OCI-LY7 (cell line): ENCODE measurements at regions of chr11 and their contacts with region 1.

Region 1: GRCh38 chr11:9314291-9315036 is at the start of gene TMEM41B:
- DNase-seq: peak; percentile 100
- H3K4me3 ChIP-seq: peak within 1 kb of the TSS; percentile 98
- H3K27ac ChIP-seq: peak within 1 kb of the TSS; percentile 89
- H3K4me1 ChIP-seq: peaks cover 27% of the 10 kb centered on the region
- CTCF ChIP-seq: 0 out of 2 replicates have a peak, but pooled peaks have one; percentile 40
- total RNA-seq, gene TMEM41B: 46.9 and 53.9 TPM in 2 replicates

Region 2: DNA sequence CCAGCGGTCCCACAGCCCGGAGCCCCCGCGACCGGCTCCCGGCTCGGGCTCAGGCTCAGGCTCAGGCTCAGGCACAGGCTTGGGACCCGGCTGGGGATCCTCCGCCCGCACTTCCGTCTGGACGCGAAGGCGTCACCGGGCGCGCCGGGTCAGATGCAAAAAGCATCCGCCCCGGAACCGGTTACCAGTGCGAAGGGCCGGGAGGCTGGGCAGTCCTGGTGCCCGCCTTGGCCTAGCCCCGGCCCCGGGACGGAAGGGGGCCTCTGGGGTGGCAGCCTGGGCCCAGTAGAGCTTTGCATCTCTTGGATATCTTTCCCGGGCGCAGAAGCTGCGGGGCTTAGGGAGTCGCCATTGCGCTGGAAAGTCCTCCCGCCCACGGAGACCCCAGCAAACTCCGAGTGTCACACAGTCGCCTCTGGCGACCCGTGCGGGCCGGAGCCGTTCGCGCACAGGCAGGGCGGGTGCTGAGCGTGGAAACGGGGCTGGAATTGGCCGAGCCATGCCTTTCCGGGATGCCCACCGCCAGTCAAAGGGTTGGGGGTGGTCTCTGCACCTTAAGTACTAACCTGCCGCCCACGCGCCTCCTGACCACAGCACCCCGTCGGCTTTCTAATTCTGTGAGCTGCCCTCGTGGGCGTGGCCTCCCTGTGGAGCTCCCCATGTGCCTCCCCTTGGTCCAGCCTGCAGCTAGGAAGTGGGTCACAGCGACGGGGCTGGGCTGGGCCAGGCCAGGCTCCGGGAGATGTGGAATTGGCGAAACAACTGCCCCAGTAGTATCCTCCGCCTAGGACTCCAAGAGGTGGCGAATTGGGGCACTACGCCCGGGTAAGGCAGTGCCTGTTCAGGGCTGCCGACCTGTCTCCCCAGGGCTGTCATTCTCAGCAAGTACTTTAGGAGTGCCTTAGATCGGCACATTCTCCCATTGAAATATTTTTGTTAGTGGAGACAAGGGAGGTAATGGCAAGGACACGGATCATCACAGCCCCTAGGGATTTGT is 349.8 kb before region 1 on chr11 and contains the start of gene TMEM9B:
- CTCF ChIA-PET with region 1: interaction called, 3 read pairs
- POLR2A ChIA-PET with region 1: interaction called, 4 read pairs
- intact Hi-C with region 1: loop called (anchors 1 kb)
- DNase-seq: peak; percentile 88
- H3K4me3 ChIP-seq: peak within 1 kb of the TSS; percentile 88
- H3K27ac ChIP-seq: peak within 1 kb of the TSS; percentile 60
- H3K4me1 ChIP-seq: peaks cover 20% of the 10 kb centered on the region
- CTCF ChIP-seq: no peak
- total RNA-seq, gene TMEM9B: 8.5 and 13.4 TPM in 2 replicates

Region 3: DNA sequence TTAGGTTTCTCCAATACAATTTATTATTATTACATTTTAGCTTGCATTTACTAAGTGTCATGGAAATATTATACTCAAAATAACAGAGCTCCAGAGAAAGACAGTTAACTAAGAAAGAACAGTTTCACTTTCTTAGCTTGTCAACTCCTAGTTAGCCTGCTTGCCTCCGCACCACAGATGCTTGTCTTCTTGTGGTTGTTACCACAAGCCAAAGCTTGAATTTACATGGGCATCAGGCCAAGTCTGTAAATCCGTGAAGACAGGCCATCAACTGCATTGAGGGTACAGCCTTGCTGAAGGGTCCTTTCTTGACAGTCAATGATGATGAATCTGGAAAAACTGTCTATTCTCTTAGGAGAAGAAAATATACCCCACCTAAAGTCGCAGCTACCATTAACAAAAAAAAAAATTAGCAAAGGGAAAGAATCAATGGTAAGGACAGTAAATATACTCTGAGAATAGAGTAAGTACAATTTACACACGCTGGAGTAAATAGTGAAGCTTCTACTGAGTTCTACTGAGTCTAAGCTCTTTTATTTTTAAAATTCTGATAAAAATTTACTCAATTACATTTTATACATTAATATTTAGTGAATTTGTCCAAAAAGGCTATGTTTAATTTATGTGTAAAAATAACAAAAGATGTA is 33.7 kb before region 1 on chr11:
- CTCF ChIA-PET with region 1: no interaction called
- POLR2A ChIA-PET with region 1: interaction called, 8 read pairs
- intact Hi-C with region 1: loop called (anchors 1 kb)
- DNase-seq: peak; percentile 43
- H3K4me3 ChIP-seq: no peak overlapping the region
- H3K27ac ChIP-seq: no peak overlapping the region
- H3K4me1 ChIP-seq: peaks cover 4% of the 10 kb centered on the region
- CTCF ChIP-seq: no peak

Region 4: DNA sequence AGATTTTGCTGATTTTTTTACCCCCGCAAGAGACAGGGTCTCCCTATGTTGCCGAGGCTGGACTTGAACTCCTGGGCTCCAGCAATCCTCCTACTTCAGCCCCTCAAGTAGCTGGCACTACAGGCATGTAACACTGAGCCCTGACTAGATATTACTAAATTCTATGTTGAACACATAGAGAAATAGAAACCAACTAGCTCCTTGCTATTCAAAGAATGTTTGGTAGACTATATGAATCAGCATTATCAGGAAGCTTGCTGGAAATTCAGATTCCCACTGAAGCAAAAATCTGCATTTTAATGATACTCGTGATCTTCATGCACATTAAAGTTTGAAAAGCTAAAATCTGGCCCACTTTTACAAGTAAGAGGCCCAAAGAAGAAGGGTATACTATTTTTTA is 12.0 kb before region 1 on chr11:
- CTCF ChIA-PET with region 1: no interaction called
- POLR2A ChIA-PET with region 1: interaction called, 12 read pairs
- intact Hi-C with region 1: no loop called
- DNase-seq: no peak
- H3K4me3 ChIP-seq: no peak overlapping the region
- H3K27ac ChIP-seq: no peak overlapping the region
- H3K4me1 ChIP-seq: no peaks in the 10 kb centered on the region
- CTCF ChIP-seq: no peak

Region 5: GRCh38 chr11:9384535-9385303 is 70.3 kb after region 1 on chr11 and contains the start of gene IPO7:
- CTCF ChIA-PET with region 1: no interaction called
- POLR2A ChIA-PET with region 1: interaction called, 6 read pairs
- intact Hi-C with region 1: loop called (anchors 2 kb)
- DNase-seq: peak; percentile 94
- H3K4me3 ChIP-seq: peak within 1 kb of the TSS; percentile 97
- H3K27ac ChIP-seq: peak within 1 kb of the TSS; percentile 64
- H3K4me1 ChIP-seq: peaks cover 27% of the 10 kb centered on the region
- CTCF ChIP-seq: peak; percentile 49
- total RNA-seq, gene IPO7: 88.3 and 120 TPM in 2 replicates

Region 6: GRCh38 chr11:9438611-9439010 is 124.1 kb after region 1 on chr11:
- CTCF ChIA-PET with region 1: no interaction called
- POLR2A ChIA-PET with region 1: interaction called, 16 read pairs
- intact Hi-C with region 1: no loop called
- DNase-seq: no peak
- H3K4me3 ChIP-seq: no peak overlapping the region
- H3K27ac ChIP-seq: no peak overlapping the region
- H3K4me1 ChIP-seq: no peaks in the 10 kb centered on the region
- CTCF ChIP-seq: no peak

Region 7: GRCh38 chr11:9460322-9461067 is 146.0 kb after region 1 on chr11 and contains the start of gene ZNF143:
- CTCF ChIA-PET with region 1: no interaction called
- POLR2A ChIA-PET with region 1: interaction called, 9 read pairs
- intact Hi-C with region 1: loop called (anchors 1 kb)
- DNase-seq: peak; percentile 100
- H3K4me3 ChIP-seq: peak within 1 kb of the TSS; percentile 97
- H3K27ac ChIP-seq: peak within 1 kb of the TSS; percentile 97
- H3K4me1 ChIP-seq: peaks cover 28% of the 10 kb centered on the region
- CTCF ChIP-seq: no peak
- total RNA-seq, gene ZNF143: 25.0 and 36.2 TPM in 2 replicates